Caco-2 (cell line): ENCODE measurements at regions of chr14 and their contacts with region 1.

Region 1: DNA sequence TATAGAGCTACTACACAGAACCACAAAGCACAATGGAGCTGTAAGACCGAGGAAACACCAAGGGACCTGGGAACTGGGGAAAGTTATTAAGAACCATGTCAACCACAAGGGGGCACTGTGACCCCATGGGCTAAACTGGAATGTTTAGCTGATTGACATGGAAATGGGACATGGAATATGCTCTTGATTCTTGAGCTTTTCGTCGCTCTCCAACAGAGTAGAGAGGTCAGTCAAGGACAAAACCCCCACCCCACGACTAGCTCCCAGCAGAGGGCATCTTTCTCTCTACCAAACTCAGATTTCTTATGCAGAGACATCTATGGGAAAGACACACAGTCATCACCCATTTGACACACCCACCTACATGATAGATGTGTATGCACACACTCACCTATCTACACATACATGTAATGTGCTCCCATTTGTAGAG is 10.1 kb downstream of the NDRG2 start:
- DNase-seq: peak; percentile 82 to 90
- H3K4me3 ChIP-seq: no peak overlapping the region
- H3K4me3 Mint-ChIP-seq: no peak overlapping the region
- H3K27ac Mint-ChIP-seq: no peak overlapping the region
- H3K4me1 ChIP-seq: peaks cover 11% of the 10 kb centered on the region
- H3K4me1 Mint-ChIP-seq: peaks cover 7% of the 10 kb centered on the region
- H3K27me3 ChIP-seq: no peaks in the 10 kb centered on the region
- H3K27me3 Mint-ChIP-seq: no peaks in the 10 kb centered on the region
- CTCF ChIP-seq: peak; percentile 87 to 89

Region 2: GRCh38 chr14:20998664-20999366 is 16.0 kb before region 1 on chr14 and contains the start of gene SLC39A2:
- CTCF ChIA-PET with region 1: interaction called, 15 read pairs
- POLR2A ChIA-PET with region 1: no interaction called
- intact Hi-C with region 1: no loop called
- DNase-seq: no peak
- H3K4me3 ChIP-seq: no peak within 1 kb of the TSS
- H3K4me3 Mint-ChIP-seq: no peak within 1 kb of the TSS
- H3K27ac Mint-ChIP-seq: no peak within 1 kb of the TSS
- H3K4me1 ChIP-seq: peaks cover 17% of the 10 kb centered on the region; the same call in 1 of the 2 replicates
- H3K4me1 Mint-ChIP-seq: peaks cover 9% of the 10 kb centered on the region
- H3K27me3 ChIP-seq: no peaks in the 10 kb centered on the region
- H3K27me3 Mint-ChIP-seq: no peaks in the 10 kb centered on the region
- CTCF ChIP-seq: no peak
- total RNA-seq, gene SLC39A2: 0.81 and 0.88 TPM in 2 replicates

Region 3: GRCh38 chr14:21034707-21035106 is 19.9 kb after region 1 on chr14 and contains the start of gene RNASE13:
- CTCF ChIA-PET with region 1: interaction called, 229 read pairs
- POLR2A ChIA-PET with region 1: interaction called, 12 read pairs
- intact Hi-C with region 1: no loop called
- DNase-seq: no peak
- H3K4me3 ChIP-seq: no peak within 1 kb of the TSS
- H3K4me3 Mint-ChIP-seq: no peak within 1 kb of the TSS
- H3K27ac Mint-ChIP-seq: no peak within 1 kb of the TSS
- H3K4me1 ChIP-seq: peaks cover 21% of the 10 kb centered on the region
- H3K4me1 Mint-ChIP-seq: peaks cover 20% of the 10 kb centered on the region
- H3K27me3 ChIP-seq: no peaks in the 10 kb centered on the region
- H3K27me3 Mint-ChIP-seq: no peaks in the 10 kb centered on the region
- CTCF ChIP-seq: no peak
- total RNA-seq, gene RNASE13: not detected in 2 replicates

Region 4: GRCh38 chr14:21049271-21049673 is 34.5 kb after region 1 on chr14:
- CTCF ChIA-PET with region 1: interaction called, 14 read pairs
- POLR2A ChIA-PET with region 1: no interaction called
- intact Hi-C with region 1: no loop called
- DNase-seq: no peak
- H3K4me3 ChIP-seq: no peak overlapping the region
- H3K4me3 Mint-ChIP-seq: no peak overlapping the region
- H3K27ac Mint-ChIP-seq: no peak overlapping the region
- H3K4me1 ChIP-seq: peaks cover 5% of the 10 kb centered on the region; the same call in 1 of the 2 replicates
- H3K4me1 Mint-ChIP-seq: peaks cover 5% of the 10 kb centered on the region
- H3K27me3 ChIP-seq: no peaks in the 10 kb centered on the region
- H3K27me3 Mint-ChIP-seq: peaks cover 11% of the 10 kb centered on the region
- CTCF ChIP-seq: no peak

Region 5: DNA sequence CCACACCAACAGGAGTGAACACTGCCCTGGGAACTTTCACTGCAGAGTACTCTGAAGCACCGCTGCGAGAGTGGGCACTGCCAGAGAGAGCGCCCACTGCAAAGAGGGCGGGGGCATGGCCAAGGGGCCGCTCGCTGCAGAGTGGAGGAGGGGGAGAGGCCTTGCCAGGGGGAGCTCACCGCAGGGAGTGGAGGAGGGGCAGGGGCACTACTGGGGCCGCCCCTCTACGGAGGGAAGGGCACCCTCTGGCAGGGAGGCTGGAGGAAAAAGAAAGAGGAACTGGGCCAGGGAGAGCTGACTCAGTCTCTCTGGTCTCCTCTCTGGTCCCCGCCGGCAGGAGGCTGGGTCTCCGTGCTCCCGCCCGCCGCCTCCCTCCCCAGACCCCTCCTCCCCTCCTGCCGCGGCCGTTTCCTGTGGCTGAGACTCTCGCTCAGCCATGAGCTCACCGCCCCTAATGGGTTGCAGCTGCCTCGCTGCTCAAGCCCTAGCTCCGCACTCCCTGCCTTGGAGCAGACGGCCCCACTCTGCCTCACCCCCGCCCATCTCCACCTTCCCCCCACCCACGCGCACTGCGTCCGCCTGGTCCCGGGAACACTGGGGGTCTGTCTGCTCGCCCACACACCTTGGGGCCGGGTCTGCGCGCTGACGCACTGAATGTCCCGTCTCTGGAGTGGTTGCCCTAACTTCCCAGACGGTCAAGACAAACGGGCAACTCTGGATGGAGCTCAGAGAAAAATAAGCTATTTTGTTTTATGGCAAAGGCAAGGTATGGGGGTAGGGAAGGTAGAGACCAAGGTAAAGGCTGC is 56.7 kb after region 1 on chr14:
- CTCF ChIA-PET with region 1: interaction called, 46 read pairs
- POLR2A ChIA-PET with region 1: interaction called, 4 read pairs
- intact Hi-C with region 1: loop called (anchors 1 kb)
- DNase-seq: peak in 1 of 2 experiments; percentile 36
- H3K4me3 ChIP-seq: peak overlapping the region; percentile 76
- H3K4me3 Mint-ChIP-seq: peak overlapping the region; percentile 84
- H3K27ac Mint-ChIP-seq: peak overlapping the region; percentile 22
- H3K4me1 ChIP-seq: peaks cover 6% of the 10 kb centered on the region
- H3K4me1 Mint-ChIP-seq: no peaks in the 10 kb centered on the region
- H3K27me3 ChIP-seq: no peaks in the 10 kb centered on the region
- H3K27me3 Mint-ChIP-seq: peaks cover 3% of the 10 kb centered on the region
- CTCF ChIP-seq: no peak

Region 6: DNA sequence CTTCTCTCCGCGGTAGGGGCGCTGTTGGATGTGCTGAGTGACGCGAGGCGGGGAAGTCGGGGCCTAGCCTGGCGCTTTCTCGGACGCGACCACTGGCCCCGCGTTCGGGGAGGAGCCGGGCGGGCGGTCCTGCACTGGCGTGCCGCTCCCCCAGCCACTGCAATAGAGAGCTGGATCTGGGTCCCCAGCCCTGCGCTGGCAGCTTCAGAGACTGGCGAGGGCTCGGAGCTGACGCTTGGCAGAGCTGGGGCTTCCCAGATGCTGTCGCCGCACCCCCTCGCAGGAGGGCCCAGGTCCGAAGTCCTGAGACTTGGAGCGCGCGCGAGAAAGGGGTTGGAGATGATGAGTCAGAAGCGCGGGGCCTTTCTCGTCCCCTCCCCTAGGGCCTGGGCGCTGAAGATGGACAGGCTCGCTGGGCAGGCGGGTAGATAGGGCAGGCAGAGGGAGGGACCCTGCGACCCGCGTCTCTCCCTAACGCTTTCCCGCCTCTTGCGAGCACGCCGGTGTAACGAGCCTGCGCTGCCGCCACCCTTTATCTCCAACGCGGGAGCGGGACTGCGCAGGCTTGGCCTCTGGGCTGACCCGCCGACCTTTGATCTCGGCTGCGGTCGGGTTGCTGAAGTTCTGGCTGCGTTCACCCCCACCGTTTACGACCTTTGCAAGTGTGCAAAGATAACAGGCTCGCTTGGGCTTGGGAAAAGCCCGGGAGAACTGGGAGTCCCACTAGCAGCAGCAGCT is 89.1 kb after region 1 on chr14:
- CTCF ChIA-PET with region 1: interaction called, 49 read pairs
- POLR2A ChIA-PET with region 1: no interaction called
- intact Hi-C with region 1: loop called (anchors 1 kb)
- DNase-seq: peak; percentile 95 to 97
- H3K4me3 ChIP-seq: peak overlapping the region; percentile 72
- H3K4me3 Mint-ChIP-seq: peak overlapping the region; percentile 87
- H3K27ac Mint-ChIP-seq: peak overlapping the region; percentile 85
- H3K4me1 ChIP-seq: peaks cover 46% of the 10 kb centered on the region
- H3K4me1 Mint-ChIP-seq: peaks cover 39% of the 10 kb centered on the region
- H3K27me3 ChIP-seq: no peaks in the 10 kb centered on the region
- H3K27me3 Mint-ChIP-seq: no peaks in the 10 kb centered on the region
- CTCF ChIP-seq: peak; percentile 59 to 85

Region 7: DNA sequence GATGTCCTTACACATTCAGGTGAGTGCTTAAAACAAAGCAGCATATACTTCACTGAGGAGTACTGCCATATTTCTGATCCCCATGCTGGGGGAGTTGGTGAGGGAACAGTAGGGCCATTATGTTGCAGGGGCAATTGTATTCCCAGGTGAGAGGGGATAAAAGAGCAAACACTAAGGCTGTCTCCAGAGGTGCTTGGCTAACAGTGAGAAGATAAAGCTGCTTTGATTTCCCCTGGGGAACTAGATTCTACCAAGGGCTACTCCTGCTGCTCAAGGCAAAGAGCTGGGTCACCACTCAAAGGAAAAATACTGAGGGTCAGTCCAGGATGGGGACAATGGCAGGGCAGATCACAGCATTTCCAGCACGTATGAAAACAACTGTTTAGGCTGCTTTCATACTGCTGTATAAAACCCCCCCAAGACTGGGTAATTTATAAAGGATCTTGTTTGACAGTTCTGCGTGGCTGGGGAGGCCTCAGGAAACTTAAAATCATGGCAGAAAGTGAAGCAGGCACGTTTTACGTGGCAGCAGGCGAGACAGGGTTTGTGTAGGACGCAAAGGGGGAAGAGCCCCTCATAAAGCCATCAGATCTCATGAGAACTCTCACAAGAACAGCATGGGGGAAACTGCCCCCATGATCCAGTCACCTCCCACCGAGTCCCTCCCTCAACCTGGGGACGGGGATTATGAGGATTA is 188.8 kb after region 1 on chr14:
- CTCF ChIA-PET with region 1: no interaction called
- POLR2A ChIA-PET with region 1: no interaction called
- intact Hi-C with region 1: no loop called
- DNase-seq: no peak
- H3K4me3 ChIP-seq: no peak overlapping the region
- H3K4me3 Mint-ChIP-seq: no peak overlapping the region
- H3K27ac Mint-ChIP-seq: peak overlapping the region; percentile 36
- H3K4me1 ChIP-seq: no peaks in the 10 kb centered on the region
- H3K4me1 Mint-ChIP-seq: peaks cover 25% of the 10 kb centered on the region
- H3K27me3 ChIP-seq: no peaks in the 10 kb centered on the region
- H3K27me3 Mint-ChIP-seq: no peaks in the 10 kb centered on the region
- CTCF ChIP-seq: no peak